A549 (cell line): ENCODE measurements at regions of chr22 and their contacts with region 1.

Region 1: DNA sequence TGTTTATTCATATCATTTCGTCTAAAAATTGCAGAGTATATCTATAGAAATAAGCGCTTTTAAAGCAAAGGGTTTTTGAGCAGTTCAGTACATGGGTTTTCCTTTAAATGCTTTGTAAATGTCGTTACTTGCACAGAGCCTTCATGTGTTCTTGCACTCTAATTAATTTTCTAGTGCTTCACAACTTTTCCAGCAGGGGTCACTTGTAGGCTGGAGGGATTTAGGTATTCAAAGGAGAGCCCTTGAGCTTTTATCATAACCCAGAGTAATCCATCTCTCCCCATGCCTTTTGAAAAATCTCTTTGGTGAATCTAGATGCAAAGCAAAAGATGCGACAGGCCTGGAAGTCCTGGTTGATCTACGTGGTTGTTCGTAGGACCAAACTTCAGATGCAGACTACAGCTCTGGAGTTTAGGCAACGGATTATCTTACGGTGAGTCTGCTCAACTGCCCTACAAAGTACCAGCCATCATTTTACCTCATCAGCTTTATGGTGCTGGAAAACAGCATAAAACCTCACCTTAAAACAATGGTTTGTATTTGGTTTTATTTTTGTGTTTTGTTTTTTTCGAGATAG is 60.4 kb downstream of the SFI1 start:
- DNase-seq: peak; percentile 16 to 18
- ATAC-seq: peak in 1 of 2 experiments; percentile 68; a peak in 3 of 6 replicates
- H3K4me3 ChIP-seq: no peak overlapping the region
- H3K27ac ChIP-seq: no peak overlapping the region
- H3K4me1 ChIP-seq: no peaks in the 10 kb centered on the region; the same call in 2 of the 3 replicates
- CTCF ChIP-seq: peak; percentile 37; the same call in 1 of the 3 replicates
- EP300 ChIP-seq: no peak
- POLR2A ChIP-seq: no peak
- RAD21 ChIP-seq: peak in 1 of 2 experiments; percentile 42; a peak in 3 of 5 replicates

Region 2: DNA sequence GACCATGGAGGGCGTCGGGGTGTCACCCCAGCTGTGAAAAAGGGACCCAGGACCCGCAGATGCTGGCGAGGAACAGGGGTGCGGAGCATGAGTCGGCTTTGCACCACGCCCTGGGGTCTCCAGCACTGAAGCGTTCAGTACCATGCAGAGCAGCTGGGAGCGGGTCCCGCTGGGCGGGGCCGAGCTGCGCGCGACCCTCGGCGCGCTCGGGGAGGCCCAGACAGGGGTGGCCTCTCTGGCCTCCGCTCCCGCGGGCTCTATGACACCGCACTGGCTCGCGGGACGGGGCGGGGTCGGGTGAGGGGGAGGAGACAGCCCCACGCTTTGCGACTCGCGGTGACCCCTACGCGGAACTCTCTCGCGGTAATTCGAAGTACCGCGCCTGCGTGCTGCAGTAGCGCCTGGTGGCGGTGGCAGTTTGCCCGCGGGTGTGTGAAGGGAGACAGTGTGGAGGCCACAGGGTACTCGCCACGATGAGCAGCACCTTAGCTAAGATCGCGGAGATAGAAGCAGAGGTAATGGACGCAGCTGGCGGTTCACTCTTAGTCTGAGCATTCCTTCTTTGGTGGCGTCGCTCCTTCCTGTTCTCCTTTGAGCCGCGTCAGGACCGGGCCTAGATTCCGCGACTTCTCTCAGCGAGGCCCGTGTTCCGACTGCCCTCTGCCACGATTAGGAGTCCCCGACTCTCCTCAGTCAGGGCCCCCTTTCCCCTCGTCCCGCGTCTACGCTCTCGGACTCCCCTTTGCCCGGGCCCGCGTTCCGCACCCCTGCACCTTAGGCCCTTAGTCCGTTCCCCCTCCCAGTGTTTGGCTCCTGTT is 157.3 kb before region 1 on chr22 and contains the start of gene DRG1:
- CTCF ChIA-PET with region 1: no interaction called
- POLR2A ChIA-PET with region 1: no interaction called
- DNase-seq: peak; percentile 85 to 92
- ATAC-seq: peak; percentile 99
- H3K4me3 ChIP-seq: peak within 1 kb of the TSS; percentile 86
- H3K27ac ChIP-seq: peak within 1 kb of the TSS; percentile 93 to 96
- H3K4me1 ChIP-seq: no peaks in the 10 kb centered on the region
- CTCF ChIP-seq: no peak
- EP300 ChIP-seq: no peak
- POLR2A ChIP-seq: peak; percentile 76
- RAD21 ChIP-seq: no peak
- polyA plus RNA-seq, gene DRG1: 76.1 and 77.5 TPM in 2 replicates

Region 3: GRCh38 chr22:31520051-31520450 is 36.7 kb before region 1 on chr22:
- CTCF ChIA-PET with region 1: no interaction called
- POLR2A ChIA-PET with region 1: no interaction called
- DNase-seq: no peak
- ATAC-seq: no peak
- H3K4me3 ChIP-seq: no peak overlapping the region
- H3K27ac ChIP-seq: no peak overlapping the region
- H3K4me1 ChIP-seq: no peaks in the 10 kb centered on the region
- CTCF ChIP-seq: no peak
- EP300 ChIP-seq: no peak
- POLR2A ChIP-seq: no peak
- RAD21 ChIP-seq: no peak

Region 4: DNA sequence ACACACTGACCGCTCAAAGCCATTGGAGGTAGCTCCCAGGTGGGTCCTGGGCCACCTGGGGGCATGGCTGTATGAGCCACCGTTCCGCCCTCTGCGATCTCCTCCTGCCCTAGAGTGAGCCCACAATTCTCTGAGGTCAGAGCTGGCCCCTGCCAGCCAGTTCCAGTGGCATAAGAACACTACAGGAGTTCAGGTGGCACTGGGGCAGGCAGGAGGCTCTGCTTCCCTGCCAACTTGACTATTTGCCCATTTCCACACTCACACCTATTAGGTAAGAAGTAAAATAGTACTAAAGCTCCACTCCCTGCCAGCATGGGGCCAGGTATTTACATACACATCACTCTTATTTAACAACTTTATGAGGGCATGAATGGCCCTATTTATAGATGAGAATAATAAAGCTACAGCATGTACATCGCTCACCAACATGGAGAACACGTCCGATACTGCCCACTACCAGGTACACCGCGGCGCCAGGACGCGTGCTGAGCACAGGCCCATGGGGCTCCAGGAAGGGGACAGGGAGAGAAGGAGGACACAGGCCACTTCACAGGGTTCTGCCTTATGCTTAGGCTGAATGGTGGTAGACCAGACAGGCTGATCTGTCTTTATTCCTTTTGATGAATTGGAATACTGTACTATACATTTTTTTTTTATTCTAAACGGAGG is 79.1 kb after region 1 on chr22:
- CTCF ChIA-PET with region 1: interaction called, 21 read pairs
- POLR2A ChIA-PET with region 1: no interaction called
- DNase-seq: no peak
- ATAC-seq: no peak
- H3K4me3 ChIP-seq: no peak overlapping the region
- H3K27ac ChIP-seq: no peak overlapping the region
- H3K4me1 ChIP-seq: 0 out of 3 replicates have a peak, but pooled peaks cover 5% of the 10 kb centered on the region
- CTCF ChIP-seq: no peak
- EP300 ChIP-seq: no peak
- POLR2A ChIP-seq: no peak
- RAD21 ChIP-seq: no peak